ENCODE measurements at regions of chr1 and their contacts with region 1.

Region 1: DNA sequence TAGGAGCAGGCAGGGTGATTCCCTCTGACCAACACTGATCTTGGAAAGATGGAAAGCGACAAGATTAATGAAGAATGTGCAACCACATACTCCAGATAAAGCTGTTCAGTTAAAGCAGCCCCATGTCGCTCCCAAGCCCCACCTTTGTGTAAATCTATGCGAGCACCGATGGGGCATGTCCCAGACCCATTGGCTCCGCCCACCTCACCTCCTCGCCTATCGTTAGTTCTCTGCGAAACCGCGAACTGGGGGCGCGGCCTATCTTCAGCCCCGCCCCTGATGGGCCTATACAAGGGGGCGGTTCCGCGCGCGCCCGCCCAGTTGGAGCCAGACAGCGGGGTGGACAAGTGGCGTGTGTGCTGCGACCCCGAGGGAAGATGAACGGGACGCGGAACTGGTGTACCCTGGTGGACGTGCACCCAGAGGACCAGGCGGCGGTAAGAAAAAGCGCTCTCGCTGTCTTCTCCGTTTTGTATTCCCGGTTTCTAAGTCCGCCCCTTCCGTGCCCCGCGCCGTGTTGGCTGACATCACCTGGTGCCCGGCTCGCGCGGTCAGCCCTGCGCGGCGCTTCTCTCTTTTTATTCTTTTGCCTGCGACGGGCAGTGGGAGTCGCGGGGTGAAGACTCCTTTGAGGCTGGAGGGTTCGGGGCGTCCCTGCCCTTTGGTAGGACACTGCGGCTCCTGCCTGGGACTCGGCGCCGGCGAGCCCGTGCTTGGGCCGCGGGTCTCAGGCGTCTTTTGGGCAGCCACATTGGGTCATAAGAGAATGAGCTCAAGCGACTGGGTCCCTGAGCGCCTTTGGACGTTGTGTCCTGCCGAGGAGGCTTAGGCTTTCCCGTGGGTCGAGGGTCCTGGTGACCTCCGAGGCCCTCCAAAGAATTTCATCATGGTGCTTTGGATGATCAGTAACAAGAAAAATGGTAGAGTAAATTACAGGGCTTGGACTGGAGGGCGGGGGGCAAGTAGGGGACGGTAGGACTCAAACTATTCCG is at the start of gene TUFT1:
- DNase-seq: peak; percentile 94
- ATAC-seq: peak; percentile 99
- H3K4me3 Mint-ChIP-seq: peak within 1 kb of the TSS; percentile 93
- H3K27ac Mint-ChIP-seq: peak within 1 kb of the TSS; percentile 78
- H3K4me1 Mint-ChIP-seq: peaks cover 24% of the 10 kb centered on the region
- H3K27me3 Mint-ChIP-seq: peaks cover 5% of the 10 kb centered on the region
- CTCF ChIP-seq: no peak
- total RNA-seq, gene TUFT1: 2.3 and 2.4 TPM in 2 replicates

Region 2: DNA sequence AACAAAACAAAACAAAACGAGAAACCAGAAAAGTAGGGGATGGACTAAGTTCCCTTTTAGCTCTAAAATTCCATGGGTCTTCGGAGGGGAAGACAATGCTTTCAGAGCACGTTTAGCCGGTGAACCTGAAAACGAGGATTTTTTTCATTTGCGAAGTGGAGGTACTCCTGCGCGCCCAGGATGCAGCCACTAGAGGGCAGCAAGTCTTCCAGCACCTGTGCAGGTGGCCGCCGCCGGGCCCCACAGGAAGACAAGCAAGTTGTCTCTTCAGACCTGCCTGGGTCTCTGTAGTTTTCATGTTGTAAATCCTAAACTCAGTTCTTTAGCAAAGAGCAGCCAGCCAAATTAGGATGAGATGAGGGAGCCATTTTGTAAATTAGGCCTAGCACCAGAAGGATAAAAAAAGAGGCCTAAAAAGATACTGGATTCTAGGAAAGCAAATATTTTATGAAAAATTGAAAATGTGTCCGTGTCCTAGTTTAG is 53.9 kb after region 1 on chr1:
- CTCF ChIA-PET with region 1: interaction called, 5 read pairs
- POLR2A ChIA-PET with region 1: no interaction called
- intact Hi-C with region 1: loop called (anchors 10 kb)
- DNase-seq: peak; percentile 66
- ATAC-seq: peak; percentile 97
- H3K4me3 Mint-ChIP-seq: peak overlapping the region; percentile 69
- H3K27ac Mint-ChIP-seq: peak overlapping the region; percentile 46
- H3K4me1 Mint-ChIP-seq: peaks cover 10% of the 10 kb centered on the region
- H3K27me3 Mint-ChIP-seq: peaks cover 11% of the 10 kb centered on the region
- CTCF ChIP-seq: peak; percentile 45